ENCODE measurements at regions of chr1 and their contacts with region 1.

Region 1: DNA sequence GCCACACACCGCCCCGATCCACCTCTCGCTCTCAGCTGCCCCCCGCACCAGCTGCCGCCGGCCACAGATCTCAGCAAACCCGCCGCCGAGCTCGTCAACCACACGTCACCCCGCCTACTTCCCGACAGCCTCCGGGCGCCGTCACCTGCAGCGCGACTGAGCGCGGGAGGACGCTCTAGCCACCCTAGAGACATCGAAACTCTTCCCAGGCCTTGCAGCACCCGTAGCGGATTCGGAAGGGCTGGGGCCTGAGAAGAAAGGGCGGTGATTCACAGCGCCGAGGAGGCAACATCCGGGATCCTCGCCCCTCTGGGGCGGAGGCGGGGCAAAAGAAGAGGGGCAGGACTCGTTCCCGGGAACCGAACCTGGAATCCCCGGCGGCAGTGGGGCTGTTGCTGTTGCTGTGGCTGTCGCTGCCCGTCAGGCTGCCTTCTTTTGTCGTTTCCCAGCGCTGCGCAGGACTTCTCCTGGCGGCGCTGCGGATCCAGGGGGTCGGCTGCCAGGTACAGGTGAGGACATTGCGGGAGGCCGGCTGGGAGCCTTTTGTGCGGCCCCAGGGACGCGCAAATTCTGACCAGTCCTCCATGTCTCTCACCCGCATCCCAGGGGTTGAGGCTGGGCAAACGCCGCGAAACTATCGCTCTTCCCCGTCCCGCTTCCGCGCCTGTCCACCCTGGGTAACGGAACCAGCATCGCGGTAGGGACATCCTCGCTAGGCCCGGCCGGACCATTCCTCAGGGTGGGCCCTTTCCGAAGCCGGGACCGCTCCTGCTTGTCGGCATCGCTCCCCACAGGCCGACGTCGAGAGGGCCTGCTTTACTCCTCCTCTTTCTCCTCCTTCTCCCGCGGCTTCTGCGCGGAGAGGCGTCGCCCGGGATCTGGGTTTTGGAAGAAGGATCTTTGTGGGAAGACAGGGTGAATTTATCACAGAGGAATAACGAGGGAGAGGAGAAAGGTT is at the starts of genes RO60 and UCHL5:
- DNase-seq: peak; percentile 79 to 97 (median 93)
- ATAC-seq: peak; percentile 96 to 99 (median 98)
- H3K4me3 ChIP-seq: peak within 1 kb of the TSS; percentile 98 to 99
- H3K4me3 Mint-ChIP-seq: peak within 1 kb of the TSS; percentile 93 to 98 (median 96)
- H3K27ac ChIP-seq: peak within 1 kb of the TSS; percentile 92
- H3K27ac Mint-ChIP-seq: peak within 1 kb of the TSS; percentile 96 to 97
- H3K4me1 ChIP-seq: peaks cover 12 to 20% of the 10 kb centered on the region in 2 experiments
- H3K4me1 Mint-ChIP-seq: peaks cover 67 to 69% (median 68%) of the 10 kb centered on the region in 3 donors
- H3K27me3 ChIP-seq: no peaks in the 10 kb centered on the region
- H3K27me3 Mint-ChIP-seq: no peaks in the 10 kb centered on the region
- total RNA-seq, gene RO60: 54.3 to 66.4 (median 62.3) TPM
- total RNA-seq, gene UCHL5: 20.8 to 32.2 (median 27.1) TPM

Region 2: GRCh38 chr1:192808518-192809306 is 250.8 kb before region 1 on chr1 and contains the start of gene RGS2:
- CTCF ChIA-PET with region 1: interaction called in 1 of 2 experiments, 16 read pairs
- POLR2A ChIA-PET with region 1: interaction called in 1 of 2 experiments, 11 read pairs
- DNase-seq: peak; percentile 74 to 93 (median 85)
- ATAC-seq: peak; percentile 92 to 97 (median 95)
- H3K4me3 ChIP-seq: peak within 1 kb of the TSS; percentile 81 to 87
- H3K4me3 Mint-ChIP-seq: peak within 1 kb of the TSS; percentile 97 to 98 (median 97)
- H3K27ac ChIP-seq: peak within 1 kb of the TSS; percentile 77
- H3K27ac Mint-ChIP-seq: peak within 1 kb of the TSS; percentile 92 to 97
- H3K4me1 ChIP-seq: peaks cover 2 to 18% of the 10 kb centered on the region in 2 experiments
- H3K4me1 Mint-ChIP-seq: peaks cover 33 to 41% (median 34%) of the 10 kb centered on the region in 3 donors
- H3K27me3 ChIP-seq: no peaks in the 10 kb centered on the region
- H3K27me3 Mint-ChIP-seq: no peaks in the 10 kb centered on the region
- total RNA-seq, gene RGS2: 13.9 to 129 (median 20.7) TPM

Region 3: GRCh38 chr1:192860478-192861185 is 198.9 kb before region 1 on chr1:
- CTCF ChIA-PET with region 1: no interaction called
- POLR2A ChIA-PET with region 1: no interaction called
- DNase-seq: no peak
- ATAC-seq: no peak
- H3K4me3 ChIP-seq: no peak overlapping the region
- H3K4me3 Mint-ChIP-seq: no peak overlapping the region
- H3K27ac ChIP-seq: no peak overlapping the region
- H3K27ac Mint-ChIP-seq: no peak overlapping the region
- H3K4me1 ChIP-seq: no peaks in the 10 kb centered on the region
- H3K4me1 Mint-ChIP-seq: no peaks in the 10 kb centered on the region
- H3K27me3 ChIP-seq: no peaks in the 10 kb centered on the region
- H3K27me3 Mint-ChIP-seq: no peaks in the 10 kb centered on the region

Region 4: GRCh38 chr1:193019442-193020026 is 40.0 kb before region 1 on chr1:
- CTCF ChIA-PET with region 1: interaction called in 1 of 2 experiments, 10 read pairs
- POLR2A ChIA-PET with region 1: no interaction called
- DNase-seq: peak in 2 of 35 experiments; percentile 5 to 61
- ATAC-seq: peak in 2 of 4 experiments; percentile 37 to 43
- H3K4me3 ChIP-seq: no peak overlapping the region
- H3K4me3 Mint-ChIP-seq: no peak overlapping the region
- H3K27ac ChIP-seq: no peak overlapping the region
- H3K27ac Mint-ChIP-seq: no peak overlapping the region
- H3K4me1 ChIP-seq: no peaks in the 10 kb centered on the region
- H3K4me1 Mint-ChIP-seq: peaks cover 0 to 2% (median 0%) of the 10 kb centered on the region in 3 donors
- H3K27me3 ChIP-seq: no peaks in the 10 kb centered on the region
- H3K27me3 Mint-ChIP-seq: no peaks in the 10 kb centered on the region

Region 5: DNA sequence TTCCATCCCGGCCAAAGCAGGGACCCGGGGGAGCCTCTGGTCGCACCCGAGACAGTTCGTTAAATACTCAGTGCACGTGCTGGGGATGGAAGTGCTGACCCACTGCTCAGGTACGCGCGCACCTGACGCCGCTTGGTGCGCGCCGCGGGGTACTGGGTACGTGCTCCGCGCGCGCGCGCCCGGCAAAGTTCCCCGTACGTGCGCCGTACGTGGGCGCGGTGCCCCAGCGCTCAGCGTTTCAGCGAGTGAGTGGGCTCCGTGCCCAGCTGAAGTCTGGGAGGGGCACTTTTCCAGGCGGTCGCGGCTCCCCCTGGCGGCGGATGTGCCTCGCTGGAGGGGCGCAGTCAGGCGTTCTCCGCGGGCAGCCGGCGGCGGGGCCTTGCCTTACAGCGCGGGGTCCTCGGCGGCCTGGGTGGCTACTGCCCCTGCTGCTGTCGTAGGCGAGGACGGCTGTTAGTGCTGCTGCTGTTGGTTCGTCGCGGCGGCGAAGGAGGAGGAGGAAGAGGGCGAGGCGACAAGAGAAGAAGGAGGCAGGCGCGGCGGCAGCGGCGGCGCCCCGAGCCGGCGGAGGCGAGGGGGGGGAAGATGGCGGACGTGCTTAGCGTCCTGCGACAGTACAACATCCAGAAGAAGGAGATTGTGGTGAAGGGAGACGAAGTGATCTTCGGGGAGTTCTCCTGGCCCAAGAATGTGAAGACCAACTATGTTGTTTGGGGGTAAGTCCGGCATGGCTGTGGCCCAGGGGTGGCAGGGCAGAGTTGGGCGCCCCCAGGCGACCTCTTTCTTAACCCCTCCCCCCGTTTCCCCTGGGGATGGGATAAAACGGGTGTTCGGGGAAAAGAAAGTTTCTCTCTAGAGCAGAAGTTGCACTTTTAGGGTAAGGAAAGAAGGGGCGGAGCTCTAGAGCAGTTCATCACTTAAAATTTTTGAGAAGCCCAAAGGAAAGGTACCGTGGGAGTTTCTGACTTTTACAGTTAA is 62.4 kb after region 1 on chr1 and contains the start of gene CDC73:
- CTCF ChIA-PET with region 1: interaction called in 1 of 2 experiments, 19 read pairs
- POLR2A ChIA-PET with region 1: interaction called, 3 to 4 read pairs
- DNase-seq: peak; percentile 97 to 100 (median 98)
- ATAC-seq: peak; percentile 92 to 94 (median 93)
- H3K4me3 ChIP-seq: peak within 1 kb of the TSS; percentile 94 to 99
- H3K4me3 Mint-ChIP-seq: peak within 1 kb of the TSS; percentile 93 to 96 (median 96)
- H3K27ac ChIP-seq: peak within 1 kb of the TSS; percentile 98
- H3K27ac Mint-ChIP-seq: peak within 1 kb of the TSS; percentile 98
- H3K4me1 ChIP-seq: peaks cover 20 to 22% of the 10 kb centered on the region in 2 experiments
- H3K4me1 Mint-ChIP-seq: peaks cover 42 to 58% (median 52%) of the 10 kb centered on the region in 3 donors
- H3K27me3 ChIP-seq: no peaks in the 10 kb centered on the region
- H3K27me3 Mint-ChIP-seq: no peaks in the 10 kb centered on the region
- total RNA-seq, gene CDC73: 54.1 to 64.4 (median 57.4) TPM